PC-3 (cell line): ENCODE measurements at regions of chr2 and their contacts with region 1.

Region 1: DNA sequence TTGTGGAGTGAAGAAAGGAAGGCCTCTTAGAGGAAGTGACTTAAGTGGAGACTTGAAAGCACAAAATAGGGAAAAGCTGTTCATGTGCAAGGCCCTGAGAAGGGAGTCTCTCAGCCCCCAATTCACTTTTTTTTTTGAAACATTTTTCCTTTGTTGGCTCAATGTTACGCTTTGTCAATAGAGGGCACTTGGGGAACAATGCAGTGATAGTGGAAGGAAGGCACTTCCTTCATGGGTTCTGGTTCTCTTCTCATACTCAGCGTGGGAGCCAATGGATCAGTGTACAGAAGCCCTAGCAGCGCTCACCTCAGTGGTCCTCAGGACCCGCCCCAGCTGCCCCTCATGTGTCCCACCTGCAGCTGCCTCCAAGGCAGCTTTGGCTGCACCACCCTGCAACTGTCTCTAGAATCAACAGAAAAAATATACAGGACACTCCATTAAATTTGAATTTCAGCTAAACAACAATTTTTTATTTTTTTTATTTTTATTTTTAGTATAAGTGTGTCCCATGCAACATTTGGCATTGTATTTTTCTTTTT is 8.6 kb upstream of the C2orf42 start:
- DNase-seq: no peak
- ATAC-seq: no peak
- H3K4me3 ChIP-seq: no peak overlapping the region
- H3K27ac ChIP-seq: no peak overlapping the region
- H3K4me1 ChIP-seq: no peaks in the 10 kb centered on the region
- H3K27me3 ChIP-seq: no peaks in the 10 kb centered on the region
- CTCF ChIP-seq: no peak

Region 2: GRCh38 chr2:70124983-70125480 is 74.4 kb before region 1 on chr2:
- CTCF ChIA-PET with region 1: no interaction called
- POLR2A ChIA-PET with region 1: no interaction called
- intact Hi-C with region 1: no loop called
- DNase-seq: peak; percentile 38
- ATAC-seq: peak; percentile 66
- H3K4me3 ChIP-seq: peak overlapping the region; percentile 78
- H3K27ac ChIP-seq: peak overlapping the region; percentile 72
- H3K4me1 ChIP-seq: peaks cover 21% of the 10 kb centered on the region
- H3K27me3 ChIP-seq: no peaks in the 10 kb centered on the region
- CTCF ChIP-seq: no peak

Region 3: DNA sequence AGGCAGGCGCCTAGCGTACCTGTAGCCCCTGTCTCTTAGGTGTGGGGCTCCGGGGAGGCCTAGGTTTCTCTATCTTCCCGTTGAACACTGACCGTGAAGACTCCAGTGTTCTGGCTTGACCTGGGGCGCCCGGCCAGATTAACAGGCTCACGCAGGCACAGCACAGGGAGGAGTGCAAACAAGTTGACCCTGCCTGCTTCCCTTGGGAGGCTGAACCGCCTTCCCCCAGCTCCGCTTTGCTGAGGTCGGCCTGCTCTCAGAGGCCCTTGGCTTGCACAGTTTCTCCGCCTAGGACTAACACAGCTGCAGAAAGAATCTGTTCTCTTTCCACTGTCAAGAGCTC is 59.1 kb after region 1 on chr2:
- CTCF ChIA-PET with region 1: no interaction called
- POLR2A ChIA-PET with region 1: interaction called, 19 read pairs
- intact Hi-C with region 1: no loop called
- DNase-seq: peak; percentile 21
- ATAC-seq: peak; percentile 37
- H3K4me3 ChIP-seq: peak overlapping the region; percentile 98
- H3K27ac ChIP-seq: no peak overlapping the region
- H3K4me1 ChIP-seq: peaks cover 6% of the 10 kb centered on the region; the same call in 1 of the 2 replicates
- H3K27me3 ChIP-seq: no peaks in the 10 kb centered on the region
- CTCF ChIP-seq: no peak